ENCODE measurements at regions of chr17 and their contacts with region 1.

Region 1: DNA sequence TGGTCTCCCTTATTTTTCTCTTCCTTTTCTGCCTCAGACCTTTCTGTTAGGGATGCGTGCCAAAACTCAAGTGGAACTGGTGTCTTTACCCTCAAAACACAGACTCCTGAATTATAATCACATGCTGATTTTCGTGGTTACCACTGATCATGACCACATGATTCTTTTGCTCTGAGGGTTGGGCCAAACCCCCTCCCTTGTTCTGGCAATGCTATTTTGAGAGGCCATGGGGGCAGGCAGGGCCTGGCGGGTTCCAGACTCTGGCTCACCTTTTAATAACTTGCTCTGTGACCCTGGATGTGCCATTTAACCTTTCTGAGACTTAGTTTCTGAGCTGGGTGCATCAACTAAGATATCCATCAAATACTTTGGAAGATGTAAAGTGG is 99.1 kb downstream of the MSI2 start:
- DNase-seq: no peak
- H3K4me3 ChIP-seq: no peak overlapping the region
- H3K27ac ChIP-seq: peak overlapping the region in 1 of 2 donors; percentile 34
- H3K4me1 ChIP-seq: no peaks in the 10 kb centered on the region
- H3K27me3 ChIP-seq: no peaks in the 10 kb centered on the region
- CTCF ChIP-seq: no peak
- POLR2A ChIP-seq: no peak

Region 2: GRCh38 chr17:57311281-57312216 is 43.9 kb before region 1 on chr17:
- intact Hi-C with region 1: loop called (anchors 1 kb)
- DNase-seq: no peak
- H3K4me3 ChIP-seq: no peak overlapping the region
- H3K27ac ChIP-seq: no peak overlapping the region
- H3K4me1 ChIP-seq: peaks cover 0 to 6% of the 10 kb centered on the region in 2 donors
- H3K27me3 ChIP-seq: no peaks in the 10 kb centered on the region
- CTCF ChIP-seq: no peak
- POLR2A ChIP-seq: no peak

Region 3: GRCh38 chr17:57319806-57320205 is 35.7 kb before region 1 on chr17:
- intact Hi-C with region 1: loop called (anchors 2 kb)
- DNase-seq: no peak
- H3K4me3 ChIP-seq: no peak overlapping the region
- H3K27ac ChIP-seq: no peak overlapping the region
- H3K4me1 ChIP-seq: no peaks in the 10 kb centered on the region
- H3K27me3 ChIP-seq: no peaks in the 10 kb centered on the region
- CTCF ChIP-seq: no peak
- POLR2A ChIP-seq: no peak